Activated B cell treated with CpG ODN at 0.5 μM for 24 hours (primary cell): ENCODE measurements at regions of chr7 and their contacts with region 1.

Region 1: DNA sequence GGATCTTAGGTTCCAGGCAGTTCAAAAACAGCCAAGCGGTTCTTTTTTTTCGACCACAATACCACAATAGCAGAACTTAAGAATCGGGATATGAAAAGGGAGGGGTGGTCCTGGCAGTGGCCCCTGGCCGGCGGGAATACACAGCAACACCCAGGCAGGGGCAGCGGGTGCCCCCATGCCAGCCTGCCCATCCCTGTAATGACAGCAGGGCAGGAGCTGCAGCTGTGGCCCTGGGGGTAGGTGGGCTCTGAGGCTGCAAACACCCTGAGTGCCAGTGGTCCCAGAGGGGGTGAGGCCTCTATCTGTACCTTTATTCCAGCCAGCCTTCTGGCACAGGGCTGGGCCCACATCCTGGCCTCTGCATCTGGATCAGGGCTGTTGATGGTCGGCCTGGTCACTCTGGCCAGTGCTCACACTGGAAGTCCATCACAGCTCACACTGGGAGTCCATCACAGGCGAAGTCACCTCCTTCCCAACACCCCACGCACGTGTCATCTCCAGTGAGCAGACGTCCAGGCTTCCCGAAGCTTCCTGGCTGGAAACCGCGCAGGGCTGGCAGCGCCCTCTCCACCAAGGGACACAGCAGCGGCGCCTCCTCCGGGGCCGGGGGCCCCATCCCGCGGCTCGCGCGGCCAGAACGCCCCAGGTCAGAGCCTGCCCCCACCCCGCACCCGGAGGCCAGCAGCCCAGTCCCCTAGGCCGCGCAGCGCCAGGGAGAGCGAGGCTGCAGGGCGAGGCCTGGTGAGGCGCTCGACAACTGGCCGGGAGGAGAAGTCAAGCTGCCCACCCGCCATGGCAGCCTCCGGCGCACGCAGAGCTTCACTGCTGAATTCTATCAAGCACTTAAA is 247.2 kb downstream of the SEMA3D start:
- DNase-seq: no peak
- ATAC-seq: no peak
- H3K4me3 Mint-ChIP-seq: no peak overlapping the region
- H3K27ac Mint-ChIP-seq: no peak overlapping the region
- H3K4me1 Mint-ChIP-seq: no peaks in the 10 kb centered on the region
- H3K27me3 Mint-ChIP-seq: no peaks in the 10 kb centered on the region
- CTCF ChIP-seq: no peak

Region 2: GRCh38 chr7:84232646-84233045 is 707.0 kb before region 1 on chr7:
- CTCF ChIA-PET with region 1: no interaction called
- POLR2A ChIA-PET with region 1: no interaction called
- intact Hi-C with region 1: no loop called
- DNase-seq: no peak
- ATAC-seq: no peak
- H3K4me3 Mint-ChIP-seq: no peak overlapping the region
- H3K27ac Mint-ChIP-seq: no peak overlapping the region
- H3K4me1 Mint-ChIP-seq: no peaks in the 10 kb centered on the region
- H3K27me3 Mint-ChIP-seq: no peaks in the 10 kb centered on the region
- CTCF ChIP-seq: no peak

Region 3: DNA sequence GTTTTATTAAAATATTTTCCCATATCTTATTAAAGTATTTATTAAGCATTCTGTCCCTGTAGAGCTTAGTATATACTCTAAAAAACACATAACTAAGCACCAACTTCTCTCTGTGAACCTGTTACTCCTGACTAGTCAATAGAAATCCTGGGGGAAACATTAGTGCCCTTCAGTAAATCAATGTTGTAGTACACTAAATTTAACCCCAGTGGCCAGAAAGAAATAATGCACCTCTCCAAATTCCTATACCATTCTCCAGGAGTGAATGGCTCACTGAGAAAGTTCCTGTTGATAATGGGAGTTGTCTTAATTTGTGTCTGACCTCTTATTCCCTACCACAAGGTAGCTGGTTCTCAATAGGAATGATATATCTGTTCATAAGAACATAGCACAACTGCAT is 59.0 kb after region 1 on chr7:
- CTCF ChIA-PET with region 1: no interaction called
- POLR2A ChIA-PET with region 1: interaction called, 10 read pairs
- intact Hi-C with region 1: no loop called
- DNase-seq: no peak
- ATAC-seq: no peak
- H3K4me3 Mint-ChIP-seq: no peak overlapping the region
- H3K27ac Mint-ChIP-seq: no peak overlapping the region
- H3K4me1 Mint-ChIP-seq: no peaks in the 10 kb centered on the region
- H3K27me3 Mint-ChIP-seq: no peaks in the 10 kb centered on the region
- CTCF ChIP-seq: no peak